Endothelial cell of umbilical vein (primary cell): ENCODE measurements at regions of chr1 and their contacts with region 1.

Region 1: GRCh38 chr1:199691540-199691939 is 336.0 kb upstream of the NR5A2 start:
- DNase-seq: peak; percentile 98
- H3K4me3 ChIP-seq: no peak overlapping the region
- H3K27ac ChIP-seq: peak overlapping the region; percentile 89
- H3K4me1 ChIP-seq: peaks cover 49% of the 10 kb centered on the region
- H3K27me3 ChIP-seq: no peaks in the 10 kb centered on the region
- CTCF ChIP-seq: peak in 1 of 2 donors; percentile 5
- POLR2A ChIP-seq: peak; percentile 81

Region 2: DNA sequence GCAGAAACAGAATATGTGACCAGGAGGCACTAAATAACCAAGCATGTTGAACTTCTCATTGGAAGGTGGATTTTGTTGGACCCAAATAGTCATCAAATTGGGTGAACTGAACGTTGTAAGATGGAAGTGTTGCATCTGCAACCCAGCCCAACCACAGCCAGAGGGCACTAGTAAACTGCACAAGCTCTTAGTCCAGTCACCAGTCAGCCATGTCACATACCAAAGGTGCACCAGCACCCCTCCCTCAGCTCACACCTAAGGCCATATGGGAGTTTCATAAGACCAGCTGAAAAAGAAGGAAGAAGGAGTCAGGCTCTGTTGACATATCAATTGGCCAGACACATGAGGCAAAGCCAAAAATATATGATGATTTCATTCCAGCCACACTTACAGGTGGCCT is 145.8 kb before region 1 on chr1:
- CTCF ChIA-PET with region 1: no interaction called
- POLR2A ChIA-PET with region 1: no interaction called
- dilution Hi-C with region 1: no loop called
- intact Hi-C with region 1: no loop called
- DNase-seq: peak; percentile 30
- H3K4me3 ChIP-seq: no peak overlapping the region
- H3K27ac ChIP-seq: no peak overlapping the region
- H3K4me1 ChIP-seq: no peaks in the 10 kb centered on the region
- H3K27me3 ChIP-seq: no peaks in the 10 kb centered on the region
- CTCF ChIP-seq: peak; percentile 17 to 49
- POLR2A ChIP-seq: no peak

Region 3: GRCh38 chr1:199733125-199733524 is 41.6 kb after region 1 on chr1:
- CTCF ChIA-PET with region 1: interaction called, 6 read pairs
- POLR2A ChIA-PET with region 1: no interaction called
- dilution Hi-C with region 1: no loop called
- intact Hi-C with region 1: loop called (anchors 1 kb)
- DNase-seq: peak; percentile 54
- H3K4me3 ChIP-seq: no peak overlapping the region
- H3K27ac ChIP-seq: peak overlapping the region; percentile 63
- H3K4me1 ChIP-seq: peaks cover 38% of the 10 kb centered on the region
- H3K27me3 ChIP-seq: no peaks in the 10 kb centered on the region
- CTCF ChIP-seq: no peak
- POLR2A ChIP-seq: no peak

Region 4: DNA sequence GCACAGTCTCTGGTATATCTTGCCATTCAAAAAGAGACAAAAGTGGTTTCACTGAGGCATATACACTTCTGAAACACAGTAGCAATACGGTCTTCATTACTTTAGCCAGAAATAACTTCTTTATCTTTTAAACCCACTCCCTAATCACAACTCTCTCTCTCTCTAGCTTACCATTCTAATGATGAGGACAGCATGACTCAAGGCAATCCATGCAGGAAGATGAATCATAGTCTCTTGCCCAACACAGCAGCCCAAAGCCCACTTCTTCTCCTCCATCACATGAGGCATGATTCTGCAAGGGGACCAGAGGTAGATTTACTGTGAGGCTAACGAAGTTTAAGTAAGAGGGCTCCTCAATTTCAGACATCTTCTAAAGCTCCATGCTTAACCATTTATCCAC is 51.0 kb after region 1 on chr1:
- CTCF ChIA-PET with region 1: interaction called, 5 read pairs
- POLR2A ChIA-PET with region 1: interaction called, 3 read pairs
- dilution Hi-C with region 1: no loop called
- intact Hi-C with region 1: loop called (anchors 2 kb)
- DNase-seq: peak; percentile 86
- H3K4me3 ChIP-seq: no peak overlapping the region
- H3K27ac ChIP-seq: peak overlapping the region; percentile 81
- H3K4me1 ChIP-seq: peaks cover 16% of the 10 kb centered on the region
- H3K27me3 ChIP-seq: no peaks in the 10 kb centered on the region
- CTCF ChIP-seq: no peak
- POLR2A ChIP-seq: no peak

Region 5: DNA sequence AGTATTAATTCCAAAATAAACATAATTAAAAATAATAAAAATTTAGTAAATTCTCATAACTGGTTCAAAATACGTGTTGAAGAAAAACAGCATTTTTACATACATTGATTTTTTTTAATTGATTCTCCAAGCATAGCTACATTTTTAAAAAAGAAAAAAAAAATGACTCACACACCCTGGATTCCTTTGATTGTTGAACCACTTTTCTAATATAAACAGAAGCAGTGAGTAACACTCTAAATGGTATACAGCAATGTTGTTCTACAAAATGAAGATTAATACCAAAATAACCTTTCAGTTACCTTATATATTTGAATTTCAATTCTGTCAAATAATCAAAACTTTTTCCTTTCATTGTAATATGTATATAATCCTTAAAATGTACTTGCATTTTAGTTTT is 89.4 kb after region 1 on chr1:
- CTCF ChIA-PET with region 1: interaction called, 6 read pairs
- POLR2A ChIA-PET with region 1: interaction called, 6 read pairs
- dilution Hi-C with region 1: no loop called
- intact Hi-C with region 1: loop called (anchors 1 kb)
- DNase-seq: peak; percentile 56
- H3K4me3 ChIP-seq: no peak overlapping the region
- H3K27ac ChIP-seq: peak overlapping the region; percentile 63
- H3K4me1 ChIP-seq: peaks cover 45% of the 10 kb centered on the region
- H3K27me3 ChIP-seq: no peaks in the 10 kb centered on the region
- CTCF ChIP-seq: no peak
- POLR2A ChIP-seq: no peak

Region 6: DNA sequence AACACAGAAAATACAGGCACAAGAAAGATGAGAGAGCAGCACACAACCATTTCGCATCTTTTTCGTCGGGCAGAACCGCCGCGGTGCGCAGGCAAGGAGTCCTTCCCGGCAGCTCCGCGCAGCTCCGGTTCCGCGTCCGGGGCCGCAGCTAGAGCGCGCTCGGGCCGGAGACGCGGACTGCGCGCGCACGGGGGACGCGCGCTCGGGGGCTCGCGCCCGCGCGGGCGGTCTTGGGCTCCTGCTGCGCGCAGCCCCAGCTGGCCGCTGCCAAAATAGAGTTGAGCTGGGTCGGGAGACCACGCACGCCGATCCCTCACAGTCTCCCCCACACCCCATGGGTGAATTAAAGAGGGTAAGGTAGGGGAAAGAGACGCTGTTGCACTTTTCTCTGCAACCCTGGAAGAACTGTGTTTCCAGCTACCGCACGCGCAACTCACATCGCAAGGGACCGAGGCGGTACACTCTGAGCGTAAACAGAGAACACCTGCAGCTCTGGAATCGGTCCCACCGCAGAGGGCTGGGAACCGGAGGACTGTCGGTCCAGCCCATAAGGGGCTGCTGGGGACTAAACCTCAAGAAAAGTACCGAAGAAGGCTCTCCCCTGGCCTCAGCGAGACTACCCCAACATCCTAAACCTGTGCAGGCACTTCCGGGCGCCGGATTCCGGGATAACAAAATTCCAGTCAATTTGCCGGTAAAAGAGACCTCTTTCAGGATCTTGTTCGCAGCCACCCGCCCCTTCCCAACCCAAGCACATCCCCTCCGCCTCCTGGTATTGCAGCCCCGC is 337.7 kb after region 1 on chr1:
- CTCF ChIA-PET with region 1: interaction called, 11 read pairs
- POLR2A ChIA-PET with region 1: interaction called, 7 read pairs
- dilution Hi-C with region 1: no loop called
- intact Hi-C with region 1: no loop called
- DNase-seq: peak; percentile 69
- H3K4me3 ChIP-seq: peak overlapping the region; percentile 9 to 64 (median 50)
- H3K27ac ChIP-seq: no peak overlapping the region
- H3K4me1 ChIP-seq: peaks cover 7% of the 10 kb centered on the region
- H3K27me3 ChIP-seq: peaks cover 19 to 56% of the 10 kb centered on the region in 2 experiments
- CTCF ChIP-seq: no peak
- POLR2A ChIP-seq: no peak

Region 7: DNA sequence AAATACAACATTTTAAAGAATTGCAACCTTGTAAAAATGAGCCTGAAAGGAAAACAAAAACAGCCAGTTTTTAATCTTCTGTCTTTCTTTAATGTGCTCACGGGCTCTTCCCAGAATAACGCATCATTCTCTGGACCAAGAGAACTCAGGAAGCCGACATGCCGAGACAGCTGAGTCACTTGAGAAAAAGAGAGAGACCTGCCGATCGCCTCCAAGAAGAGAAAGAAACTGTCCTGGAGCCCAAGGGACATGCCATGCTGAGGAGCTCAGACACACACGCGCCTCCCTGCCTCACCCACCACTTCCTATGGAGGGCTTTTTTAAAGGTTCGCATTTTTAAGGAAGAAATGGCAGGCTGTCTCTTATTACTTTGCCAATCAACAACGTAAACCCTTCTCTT is 541.9 kb after region 1 on chr1:
- CTCF ChIA-PET with region 1: no interaction called
- POLR2A ChIA-PET with region 1: no interaction called
- dilution Hi-C with region 1: no loop called
- intact Hi-C with region 1: loop called (anchors 1 kb)
- DNase-seq: no peak
- H3K4me3 ChIP-seq: no peak overlapping the region
- H3K27ac ChIP-seq: no peak overlapping the region
- H3K4me1 ChIP-seq: peaks cover 18% of the 10 kb centered on the region
- H3K27me3 ChIP-seq: no peaks in the 10 kb centered on the region
- CTCF ChIP-seq: no peak
- POLR2A ChIP-seq: no peak

Region 8: DNA sequence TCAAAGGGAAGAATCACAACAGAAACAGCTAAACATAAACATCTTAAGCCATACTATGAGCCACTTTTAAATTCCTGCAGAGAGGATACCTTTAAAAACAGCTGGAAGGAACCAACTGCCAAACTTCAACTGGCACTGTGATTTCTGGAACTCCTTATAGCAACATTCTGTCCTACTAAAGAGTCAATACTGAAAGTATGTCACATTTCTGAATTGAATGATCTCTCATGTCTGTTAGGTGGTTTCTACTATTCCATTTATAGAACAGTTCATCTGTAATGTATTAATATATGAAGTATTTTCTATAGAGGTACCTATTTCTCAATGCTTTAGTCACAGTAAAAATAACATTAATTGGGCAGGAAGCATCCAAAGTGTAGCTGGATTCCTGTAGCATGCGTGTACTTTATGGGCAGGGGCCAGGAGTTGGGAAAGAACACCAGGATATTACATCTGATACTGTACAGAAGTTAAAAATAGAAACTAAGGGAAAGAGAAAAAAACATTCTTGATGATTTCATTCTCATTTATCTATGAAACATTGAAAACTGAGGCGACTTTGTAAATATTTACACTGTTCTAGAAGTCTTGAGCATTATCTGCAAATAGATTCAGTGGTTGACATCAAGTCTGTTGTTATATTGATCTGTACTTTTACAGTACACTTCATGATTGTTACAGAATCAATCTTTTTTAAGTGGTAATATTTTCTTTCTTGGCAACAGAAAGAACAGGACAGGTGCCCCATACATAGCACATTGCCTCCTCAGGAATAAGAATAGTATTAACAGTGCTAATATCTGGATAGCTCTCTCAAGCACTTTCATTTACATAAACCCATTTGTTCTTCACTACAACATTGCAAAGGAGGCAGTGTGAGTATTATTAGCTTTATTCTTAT is 724.4 kb after region 1 on chr1:
- CTCF ChIA-PET with region 1: no interaction called
- POLR2A ChIA-PET with region 1: no interaction called
- dilution Hi-C with region 1: no loop called
- intact Hi-C with region 1: loop called (anchors 2 kb)
- DNase-seq: peak; percentile 94
- H3K4me3 ChIP-seq: peak overlapping the region in 1 of 3 experiments; percentile 55
- H3K27ac ChIP-seq: peak overlapping the region; percentile 99
- H3K4me1 ChIP-seq: peaks cover 24% of the 10 kb centered on the region
- H3K27me3 ChIP-seq: no peaks in the 10 kb centered on the region
- CTCF ChIP-seq: no peak
- POLR2A ChIP-seq: no peak